Left ventricle myocardium superior (tissue), 1 donor: ENCODE measurements at regions of chr2 and their contacts with region 1.

Region 1: GRCh38 chr2:8953525-8953924 is 50.0 kb downstream of the MBOAT2 start:
- DNase-seq: no peak
- ATAC-seq: no peak

Region 2: DNA sequence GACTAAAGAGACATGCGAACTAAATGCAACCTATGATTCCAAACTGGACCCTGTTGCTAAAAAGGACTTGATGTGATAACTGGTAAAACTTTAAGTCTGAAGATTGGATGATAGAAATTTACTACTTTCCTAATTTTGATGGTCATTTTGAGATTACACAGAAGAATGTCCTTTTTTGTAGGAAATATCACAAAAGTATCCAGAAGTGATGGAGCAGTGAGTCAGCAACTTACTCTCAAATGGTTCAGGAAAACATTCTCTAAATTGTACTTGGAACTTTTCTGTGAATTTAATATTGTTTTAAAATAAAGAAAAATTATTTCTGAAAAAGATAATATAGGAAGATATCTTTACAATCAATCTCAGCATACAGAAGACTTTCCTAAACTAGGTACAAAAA is 30.0 kb after region 1 on chr2:
- intact Hi-C with region 1: loop called (anchors 2 kb)
- DNase-seq: no peak
- ATAC-seq: no peak